Thyroid gland (tissue), 4 donors: ENCODE measurements at regions of chr5 and their contacts with region 1.

Region 1: GRCh38 chr5:149381987-149382340 is 2.9 kb upstream of the IL17B start:
- DNase-seq: peak; percentile 51 to 60
- H3K4me3 ChIP-seq: no peak overlapping the region
- H3K27ac ChIP-seq: peak overlapping the region in 2 of 3 donors; percentile 17 to 35
- H3K4me1 ChIP-seq: peaks cover 0 to 9% of the 10 kb centered on the region in 2 donors
- H3K27me3 ChIP-seq: no peaks in the 10 kb centered on the region
- CTCF ChIP-seq: peak; percentile 55 to 85 (median 69)
- POLR2A ChIP-seq: no peak

Region 2: DNA sequence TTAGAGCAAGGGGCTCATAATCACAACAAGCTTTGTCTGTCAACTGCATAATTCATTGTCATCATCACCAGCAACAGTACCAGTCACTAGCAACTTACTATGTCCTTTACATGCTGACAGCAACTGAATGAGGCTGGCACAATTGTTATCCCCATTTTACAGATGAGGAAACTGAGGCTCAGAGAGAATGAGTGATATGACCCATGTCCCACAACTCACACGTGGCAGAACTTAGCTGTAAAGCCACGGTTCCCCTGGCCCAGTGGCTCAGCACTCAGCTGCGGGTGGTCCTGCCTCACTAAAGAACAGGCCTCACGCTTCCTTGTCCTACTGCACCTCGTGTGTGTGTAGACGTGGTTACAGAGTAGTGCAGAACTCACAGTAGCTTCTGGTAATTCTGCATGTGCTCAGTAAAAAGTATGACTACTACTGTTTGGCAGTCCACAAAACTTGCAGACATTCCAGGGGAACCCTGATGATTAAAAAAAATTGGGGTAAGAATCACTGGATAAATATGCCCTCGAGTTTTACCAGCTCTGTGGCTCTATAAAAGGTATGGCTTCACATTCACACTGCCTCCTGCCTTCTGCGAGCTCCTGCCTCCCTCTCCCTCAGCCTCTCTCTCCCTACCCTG is 80.1 kb before region 1 on chr5:
- intact Hi-C with region 1: no loop called
- DNase-seq: no peak
- H3K4me3 ChIP-seq: no peak overlapping the region
- H3K27ac ChIP-seq: no peak overlapping the region
- H3K4me1 ChIP-seq: no peaks in the 10 kb centered on the region
- H3K27me3 ChIP-seq: no peaks in the 10 kb centered on the region
- CTCF ChIP-seq: no peak
- POLR2A ChIP-seq: no peak

Region 3: GRCh38 chr5:149434162-149435014 is 52.4 kb after region 1 on chr5:
- intact Hi-C with region 1: loop called (anchors 2 kb)
- DNase-seq: peak; percentile 46 to 57
- H3K4me3 ChIP-seq: no peak overlapping the region
- H3K27ac ChIP-seq: no peak overlapping the region
- H3K4me1 ChIP-seq: no peaks in the 10 kb centered on the region
- H3K27me3 ChIP-seq: no peaks in the 10 kb centered on the region
- CTCF ChIP-seq: peak; percentile 40 to 89 (median 60)
- POLR2A ChIP-seq: no peak

Region 4: DNA sequence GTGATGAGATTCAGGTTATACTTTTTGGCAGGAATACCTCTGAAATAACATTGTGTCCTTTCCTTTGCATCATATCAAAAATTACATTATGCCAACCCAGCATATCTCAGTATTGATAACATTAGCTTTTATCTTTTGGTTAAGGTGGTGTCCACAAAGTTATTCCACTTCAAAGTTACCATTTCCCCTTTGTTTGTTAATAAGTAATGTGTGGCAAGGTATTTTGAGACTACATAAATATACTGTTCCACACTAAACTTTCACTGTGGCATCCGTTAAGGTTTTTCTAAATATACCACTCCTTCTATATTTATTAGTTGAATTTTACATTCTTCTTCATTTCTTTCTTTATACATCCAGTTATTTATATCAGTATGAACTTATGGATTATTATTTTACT is 185.3 kb after region 1 on chr5:
- intact Hi-C with region 1: loop called (anchors 5 kb)
- DNase-seq: no peak
- H3K4me3 ChIP-seq: no peak overlapping the region
- H3K27ac ChIP-seq: no peak overlapping the region
- H3K4me1 ChIP-seq: peaks cover 0 to 11% of the 10 kb centered on the region in 2 donors
- H3K27me3 ChIP-seq: no peaks in the 10 kb centered on the region
- CTCF ChIP-seq: no peak
- POLR2A ChIP-seq: no peak